Right lobe of liver (tissue), 6 donors: ENCODE measurements at regions of chr2 and their contacts with region 1.

Region 1: GRCh38 chr2:42663106-42663780 is 94.8 kb downstream of the MTA3 start:
- DNase-seq: peak; percentile 60 to 68 (median 67)
- ATAC-seq: peak; percentile 99 to 100 (median 99)
- H3K4me3 ChIP-seq: no peak overlapping the region
- H3K27ac ChIP-seq: no peak overlapping the region
- H3K4me1 ChIP-seq: no peaks in the 10 kb centered on the region
- H3K27me3 ChIP-seq: no peaks in the 10 kb centered on the region
- CTCF ChIP-seq: peak; percentile 92 to 97 (median 95)
- POLR2A ChIP-seq: no peak

Region 2: GRCh38 chr2:42513257-42513918 is 149.9 kb before region 1 on chr2:
- intact Hi-C with region 1: loop called in 1 of 2 experiments (anchors 10 kb)
- DNase-seq: no peak
- ATAC-seq: peak; percentile 76 to 92 (median 83)
- H3K4me3 ChIP-seq: no peak overlapping the region
- H3K27ac ChIP-seq: no peak overlapping the region
- H3K4me1 ChIP-seq: no peaks in the 10 kb centered on the region
- H3K27me3 ChIP-seq: no peaks in the 10 kb centered on the region
- CTCF ChIP-seq: peak; percentile 45 to 65 (median 54)
- POLR2A ChIP-seq: no peak

Region 3: DNA sequence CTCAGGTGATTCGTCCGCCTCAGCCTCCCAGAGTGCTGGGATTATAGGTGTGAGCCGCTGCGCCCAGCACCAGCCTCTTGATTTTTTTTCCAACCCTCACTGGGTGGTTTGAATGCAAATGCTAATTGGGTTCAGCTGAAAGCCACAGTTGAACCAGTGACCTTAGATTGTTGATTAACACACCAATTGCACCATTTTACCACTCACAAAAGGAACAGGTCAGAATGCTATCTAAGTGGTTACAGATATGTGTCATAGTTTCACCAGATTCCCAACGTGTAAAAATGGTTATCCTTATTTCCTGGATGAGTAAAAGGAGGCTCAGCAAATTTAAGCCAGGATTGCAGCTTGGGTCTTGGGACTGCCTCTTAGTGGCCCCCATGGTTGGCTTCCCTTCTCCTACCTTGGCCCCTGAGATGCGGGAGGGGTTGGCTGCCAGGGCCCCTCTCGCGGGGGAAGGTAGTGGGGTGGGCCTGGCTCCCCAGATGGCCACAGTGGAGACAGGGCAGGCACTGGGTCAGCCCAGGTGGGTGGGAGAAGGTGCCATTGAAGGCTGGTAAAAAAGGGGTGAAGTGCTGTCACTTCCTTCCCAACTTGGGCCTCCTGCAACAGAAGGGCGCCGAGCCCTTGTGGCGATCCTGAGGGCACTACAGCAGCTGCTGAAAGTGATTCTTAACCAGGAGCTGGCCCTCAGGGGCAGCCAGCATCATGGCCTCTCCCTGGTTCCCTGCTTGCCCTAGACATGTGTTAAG is 294.0 kb after region 1 on chr2:
- intact Hi-C with region 1: no loop called
- DNase-seq: peak in 1 of 3 donors; percentile 67
- ATAC-seq: peak; percentile 41 to 61 (median 48)
- H3K4me3 ChIP-seq: no peak overlapping the region
- H3K27ac ChIP-seq: peak overlapping the region; percentile 77 to 90 (median 83)
- H3K4me1 ChIP-seq: peaks cover 0 to 63% (median 31%) of the 10 kb centered on the region in 4 donors
- H3K27me3 ChIP-seq: no peaks in the 10 kb centered on the region
- CTCF ChIP-seq: no peak
- POLR2A ChIP-seq: peak; percentile 16

Region 4: DNA sequence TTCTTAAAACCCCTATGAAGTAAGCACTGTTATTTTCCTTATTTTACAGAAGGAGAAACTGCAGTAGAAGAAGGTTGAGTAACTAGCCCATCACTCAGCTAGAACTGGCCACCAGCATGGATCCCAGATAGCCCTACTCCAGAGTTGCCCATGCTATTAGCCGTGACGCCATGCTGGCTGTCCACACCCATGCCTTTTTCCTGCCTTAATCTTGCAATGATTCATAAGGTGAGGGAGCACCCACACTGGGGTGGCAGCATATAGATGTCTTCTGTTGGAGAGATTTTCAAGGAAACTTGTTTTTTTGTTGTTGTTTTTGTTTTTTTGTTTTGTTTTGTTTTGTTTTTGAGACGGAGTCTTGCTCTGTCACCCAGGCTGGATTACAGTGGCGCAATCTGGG is 333.3 kb after region 1 on chr2:
- intact Hi-C with region 1: no loop called
- DNase-seq: no peak
- ATAC-seq: no peak
- H3K4me3 ChIP-seq: no peak overlapping the region
- H3K27ac ChIP-seq: no peak overlapping the region
- H3K4me1 ChIP-seq: no peaks in the 10 kb centered on the region
- H3K27me3 ChIP-seq: no peaks in the 10 kb centered on the region
- CTCF ChIP-seq: no peak
- POLR2A ChIP-seq: no peak